ENCODE measurements at regions of chr13 and their contacts with region 1.

Region 1: DNA sequence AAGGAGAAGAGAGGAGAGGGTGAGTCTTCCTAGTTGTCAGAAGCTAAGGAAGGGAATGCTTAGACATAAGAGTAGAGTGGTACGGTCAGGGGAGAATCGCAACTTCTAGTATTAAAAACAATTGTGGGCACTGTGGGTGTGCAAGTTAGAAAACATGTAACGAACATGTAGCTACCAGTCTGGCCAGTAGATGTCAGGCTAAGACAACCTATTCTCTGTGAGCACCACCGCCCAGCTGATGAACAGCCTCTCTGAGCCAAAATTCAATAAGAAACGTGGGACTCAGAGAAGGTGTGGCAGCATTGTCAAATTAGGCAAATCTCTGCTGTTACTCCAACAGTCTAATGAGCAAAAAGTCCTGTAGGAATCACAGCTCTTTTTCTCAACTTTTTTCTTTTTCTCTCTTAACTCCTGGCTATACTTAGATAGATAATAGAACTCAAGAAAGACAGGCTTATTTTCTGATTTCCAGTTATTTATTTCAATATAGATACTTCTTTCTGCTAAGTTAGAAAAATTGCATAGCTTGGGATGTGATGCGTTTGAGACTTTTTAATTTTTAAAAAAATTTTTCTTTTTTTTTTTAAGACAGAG is 186.2 kb downstream of the USP12 start:
- DNase-seq: peak in 2 of 3 donors; percentile 40 to 68
- ATAC-seq: peak; percentile 69 to 71
- H3K4me3 ChIP-seq: no peak overlapping the region
- H3K27ac ChIP-seq: no peak overlapping the region
- H3K4me1 ChIP-seq: peaks cover 2% of the 10 kb centered on the region
- H3K27me3 ChIP-seq: no peaks in the 10 kb centered on the region

Region 2: GRCh38 chr13:27171827-27172494 is 186.6 kb after region 1 on chr13:
- intact Hi-C with region 1: loop called in 1 of 4 experiments (anchors 10 kb)
- DNase-seq: peak; percentile 94 to 98 (median 97)
- ATAC-seq: peak; percentile 98 to 99
- H3K4me3 ChIP-seq: peak overlapping the region; percentile 93
- H3K27ac ChIP-seq: peak overlapping the region; percentile 85
- H3K4me1 ChIP-seq: peaks cover 6% of the 10 kb centered on the region
- H3K27me3 ChIP-seq: no peaks in the 10 kb centered on the region

Region 3: DNA sequence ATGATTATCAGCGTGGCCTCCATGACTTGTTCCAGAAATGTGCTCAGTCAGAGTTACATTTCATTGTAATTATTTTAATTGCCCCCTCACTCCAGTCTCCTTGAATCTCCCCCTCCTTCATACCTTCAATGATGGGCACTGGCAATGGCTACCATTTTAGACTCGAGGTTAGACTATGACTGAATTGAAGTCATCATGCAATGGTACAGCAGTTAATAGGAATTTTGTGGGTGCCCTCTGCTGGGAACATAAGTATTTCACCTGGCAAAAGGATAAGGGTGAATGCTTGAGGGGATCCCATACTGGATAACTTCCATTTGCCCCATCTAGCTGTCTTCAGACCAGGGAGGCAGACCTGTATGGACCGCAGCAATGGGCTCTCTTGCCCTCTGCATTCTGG is 218.5 kb after region 1 on chr13:
- intact Hi-C with region 1: loop called in 1 of 4 experiments (anchors 10 kb)
- DNase-seq: no peak
- ATAC-seq: peak; percentile 47 to 49
- H3K4me3 ChIP-seq: no peak overlapping the region
- H3K27ac ChIP-seq: no peak overlapping the region
- H3K4me1 ChIP-seq: no peaks in the 10 kb centered on the region
- H3K27me3 ChIP-seq: no peaks in the 10 kb centered on the region

Region 4: DNA sequence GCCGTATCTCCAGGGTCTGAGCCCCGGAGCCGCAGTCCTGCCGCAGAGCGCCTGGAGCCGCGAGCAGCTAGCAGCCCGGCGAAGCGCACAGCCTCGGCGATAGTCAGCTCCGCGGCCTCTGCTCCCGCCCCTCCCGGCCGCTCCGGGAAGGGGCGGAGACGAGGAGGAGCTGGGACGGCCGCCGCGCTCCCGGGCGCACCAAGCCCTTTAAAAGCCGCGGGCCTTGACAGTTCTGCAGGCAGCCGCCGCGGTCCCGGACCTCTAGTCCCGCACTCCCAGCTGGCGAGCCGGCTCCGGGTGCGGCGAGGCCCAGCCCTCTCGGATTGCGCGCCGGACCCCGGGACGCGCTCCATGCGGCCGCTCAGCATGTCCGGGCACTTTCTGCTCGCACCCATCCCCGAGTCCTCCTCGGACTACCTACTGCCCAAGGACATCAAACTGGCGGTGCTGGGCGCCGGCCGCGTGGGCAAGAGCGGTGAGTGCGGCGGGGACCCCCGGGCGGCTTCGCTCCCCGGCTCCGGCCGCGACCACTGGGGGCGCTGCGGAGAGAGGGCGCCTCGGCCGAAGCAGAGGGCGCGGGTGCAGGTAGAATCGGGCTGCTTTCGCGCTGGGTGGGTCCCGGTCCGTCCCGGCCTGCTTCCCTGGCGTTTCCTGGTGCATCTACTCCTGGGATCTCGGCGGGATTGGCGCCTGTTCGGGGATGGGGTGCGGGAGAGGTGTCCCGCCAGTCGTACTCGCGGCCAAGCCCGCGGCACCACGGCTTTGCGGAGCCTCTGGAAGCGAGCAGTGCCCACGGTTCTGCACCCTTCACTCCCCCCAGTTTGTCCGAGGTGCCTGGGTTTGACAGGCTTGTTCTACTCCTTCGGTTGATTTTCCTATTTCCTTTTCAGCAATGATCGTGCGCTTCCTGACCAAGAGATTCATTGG is 285.5 kb after region 1 on chr13 and contains the start of gene RASL11A:
- intact Hi-C with region 1: loop called (anchors 5 to 10 kb)
- DNase-seq: peak; percentile 88 to 95 (median 95)
- ATAC-seq: peak; percentile 95 to 96
- H3K4me3 ChIP-seq: peak within 1 kb of the TSS; percentile 78
- H3K27ac ChIP-seq: peak within 1 kb of the TSS; percentile 86
- H3K4me1 ChIP-seq: no peaks in the 10 kb centered on the region
- H3K27me3 ChIP-seq: no peaks in the 10 kb centered on the region
- total RNA-seq, gene RASL11A: 10.5 to 35.8 (median 19.0) TPM

Region 5: DNA sequence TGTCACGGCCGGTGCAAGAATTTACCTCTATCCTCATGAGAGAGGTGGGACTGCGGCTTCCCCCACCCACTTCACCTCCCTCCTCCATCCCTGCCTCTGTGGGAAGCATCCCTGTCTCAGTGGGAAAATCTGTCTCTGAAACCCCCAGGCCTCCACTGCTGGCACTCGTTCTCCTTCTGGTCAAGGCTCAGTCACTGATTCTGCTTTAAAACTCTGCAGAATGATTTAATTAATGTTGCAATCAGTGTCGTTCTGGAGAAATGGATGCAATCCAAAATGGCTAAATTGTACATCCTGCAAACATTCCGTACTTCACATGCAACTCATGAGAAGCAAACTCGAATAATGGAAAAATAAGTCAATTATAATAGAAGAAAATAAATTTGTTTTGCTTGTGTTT is 290.8 kb after region 1 on chr13:
- intact Hi-C with region 1: loop called (anchors 5 to 10 kb)
- DNase-seq: peak in 1 of 3 donors; percentile 57
- ATAC-seq: no peak
- H3K4me3 ChIP-seq: no peak overlapping the region
- H3K27ac ChIP-seq: no peak overlapping the region
- H3K4me1 ChIP-seq: no peaks in the 10 kb centered on the region
- H3K27me3 ChIP-seq: no peaks in the 10 kb centered on the region

Region 6: GRCh38 chr13:27355894-27356293 is 370.5 kb after region 1 on chr13:
- intact Hi-C with region 1: loop called (anchors 2 to 5 kb)
- DNase-seq: no peak
- ATAC-seq: peak; percentile 36 to 51
- H3K4me3 ChIP-seq: no peak overlapping the region
- H3K27ac ChIP-seq: no peak overlapping the region
- H3K4me1 ChIP-seq: no peaks in the 10 kb centered on the region
- H3K27me3 ChIP-seq: no peaks in the 10 kb centered on the region